Activated CD4-positive, alpha-beta T cell treated with anti-CD3 and anti-CD28 coated beads for 36 hours (primary cell): ENCODE measurements at regions of chr11 and their contacts with region 1.

Region 1: GRCh38 chr11:19561011-19561410 is 151.6 kb upstream of the NAV2 start:
- DNase-seq: no peak
- ATAC-seq: no peak
- H3K4me3 Mint-ChIP-seq: no peak overlapping the region
- H3K27ac Mint-ChIP-seq: no peak overlapping the region
- H3K4me1 Mint-ChIP-seq: peaks cover 2% of the 10 kb centered on the region
- H3K27me3 Mint-ChIP-seq: peaks cover 10% of the 10 kb centered on the region

Region 2: GRCh38 chr11:19808076-19808911 is 247.3 kb after region 1 on chr11:
- CTCF ChIA-PET with region 1: no interaction called
- POLR2A ChIA-PET with region 1: no interaction called
- intact Hi-C with region 1: loop called in 1 of 2 experiments (anchors 5 kb)
- DNase-seq: no peak
- ATAC-seq: no peak
- H3K4me3 Mint-ChIP-seq: no peak overlapping the region
- H3K27ac Mint-ChIP-seq: no peak overlapping the region
- H3K4me1 Mint-ChIP-seq: no peaks in the 10 kb centered on the region
- H3K27me3 Mint-ChIP-seq: peaks cover 7% of the 10 kb centered on the region

Region 3: GRCh38 chr11:19903620-19904069 is 342.6 kb after region 1 on chr11:
- CTCF ChIA-PET with region 1: interaction called, 11 read pairs
- POLR2A ChIA-PET with region 1: no interaction called
- intact Hi-C with region 1: loop called (anchors 1 kb)
- DNase-seq: peak; percentile 77
- ATAC-seq: no peak
- H3K4me3 Mint-ChIP-seq: no peak overlapping the region
- H3K27ac Mint-ChIP-seq: no peak overlapping the region
- H3K4me1 Mint-ChIP-seq: no peaks in the 10 kb centered on the region
- H3K27me3 Mint-ChIP-seq: peaks cover 2% of the 10 kb centered on the region